PC-9 (cell line): ENCODE measurements at regions of chr2 and their contacts with region 1.

Region 1: DNA sequence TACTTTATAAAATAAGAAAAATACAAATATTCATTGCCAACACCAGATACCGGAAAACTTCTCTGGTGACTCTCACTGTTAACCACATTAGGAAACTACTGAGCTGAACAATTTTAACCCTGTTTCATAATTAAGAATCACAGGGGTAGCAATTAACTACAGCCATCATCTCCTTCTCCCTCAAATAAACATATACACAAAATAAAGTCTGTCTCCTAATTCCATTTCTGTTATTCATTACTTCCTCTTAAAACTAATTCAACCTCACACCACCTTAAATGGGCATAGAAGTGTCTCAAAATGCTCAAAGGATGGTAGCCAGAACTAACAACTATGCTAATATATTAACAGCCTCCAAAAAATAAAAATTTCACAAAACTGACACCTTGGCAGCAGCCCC is 60.7 kb downstream of the ACVR1 start:
- DNase-seq: no peak
- H3K4me3 ChIP-seq: no peak overlapping the region
- H3K27ac ChIP-seq: no peak overlapping the region
- H3K4me1 ChIP-seq: no peaks in the 10 kb centered on the region
- H3K27me3 ChIP-seq: no peaks in the 10 kb centered on the region
- CTCF ChIP-seq: no peak

Region 2: DNA sequence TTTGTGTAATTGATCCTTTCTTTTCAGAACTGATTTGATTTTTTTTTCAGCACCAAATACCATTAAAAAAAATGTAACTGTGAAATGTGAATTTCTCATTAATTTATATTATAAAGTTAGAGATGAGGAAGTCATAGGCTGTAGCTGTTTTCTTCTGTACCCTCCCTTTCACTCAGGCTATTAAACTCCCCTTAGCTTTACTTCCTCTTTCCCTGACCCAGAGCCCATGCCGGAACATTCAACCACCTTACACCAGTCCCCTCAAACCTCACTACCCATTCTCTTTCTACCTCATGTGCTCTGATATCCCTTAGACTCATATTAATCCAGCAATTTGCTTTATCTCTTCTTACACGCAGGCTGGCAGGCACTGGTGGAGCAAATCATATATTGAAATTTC is 545.5 kb before region 1 on chr2:
- CTCF ChIA-PET with region 1: no interaction called
- POLR2A ChIA-PET with region 1: no interaction called
- intact Hi-C with region 1: no loop called
- DNase-seq: no peak
- H3K4me3 ChIP-seq: no peak overlapping the region
- H3K27ac ChIP-seq: no peak overlapping the region
- H3K4me1 ChIP-seq: no peaks in the 10 kb centered on the region
- H3K27me3 ChIP-seq: no peaks in the 10 kb centered on the region
- CTCF ChIP-seq: no peak

Region 3: GRCh38 chr2:157838442-157839161 is 23.2 kb after region 1 on chr2:
- CTCF ChIA-PET with region 1: no interaction called
- POLR2A ChIA-PET with region 1: no interaction called
- intact Hi-C with region 1: loop called (anchors 2 kb)
- DNase-seq: no peak
- H3K4me3 ChIP-seq: no peak overlapping the region
- H3K27ac ChIP-seq: peak overlapping the region; percentile 44
- H3K4me1 ChIP-seq: peaks cover 19% of the 10 kb centered on the region
- H3K27me3 ChIP-seq: no peaks in the 10 kb centered on the region
- CTCF ChIP-seq: no peak

Region 4: GRCh38 chr2:157874997-157875640 is 59.7 kb after region 1 on chr2:
- CTCF ChIA-PET with region 1: no interaction called
- POLR2A ChIA-PET with region 1: no interaction called
- intact Hi-C with region 1: no loop called
- DNase-seq: peak; percentile 7 to 42
- H3K4me3 ChIP-seq: peak overlapping the region; percentile 59; the same call in 1 of the 2 replicates
- H3K27ac ChIP-seq: no peak overlapping the region
- H3K4me1 ChIP-seq: peaks cover 5% of the 10 kb centered on the region; the same call in 1 of the 2 replicates
- H3K27me3 ChIP-seq: no peaks in the 10 kb centered on the region
- CTCF ChIP-seq: no peak